ENCODE measurements at regions of chr19 and their contacts with region 1.

Region 1: GRCh38 chr19:913080-913748 is at the start of gene R3HDM4:
- DNase-seq: peak; percentile 75 to 89 (median 82)
- ATAC-seq: peak; percentile 40 to 46
- H3K4me3 Mint-ChIP-seq: peak within 1 kb of the TSS; percentile 81 to 92 (median 85)
- H3K27ac Mint-ChIP-seq: peak within 1 kb of the TSS; percentile 80 to 98 (median 94)
- H3K4me1 Mint-ChIP-seq: peaks cover 15 to 41% (median 31%) of the 10 kb centered on the region in 4 donors
- H3K27me3 Mint-ChIP-seq: peaks cover 0 to 2% (median 0%) of the 10 kb centered on the region in 5 donors
- polyA plus RNA-seq, gene R3HDM4: 137 to 238 (median 182) TPM

Region 2: GRCh38 chr19:892243-893050 is 20.8 kb before region 1 on chr19:
- POLR2A ChIA-PET with region 1: interaction called, 376 read pairs
- DNase-seq: peak in 1 of 10 donors; percentile 53
- ATAC-seq: peak; percentile 49 to 59
- H3K4me3 Mint-ChIP-seq: peak overlapping the region; percentile 77 to 96 (median 90)
- H3K27ac Mint-ChIP-seq: peak overlapping the region; percentile 66 to 100 (median 97)
- H3K4me1 Mint-ChIP-seq: peaks cover 6 to 41% (median 32%) of the 10 kb centered on the region in 4 donors
- H3K27me3 Mint-ChIP-seq: peaks cover 0 to 3% (median 0%) of the 10 kb centered on the region in 5 donors

Region 3: GRCh38 chr19:900302-901111 is 12.7 kb before region 1 on chr19:
- POLR2A ChIA-PET with region 1: interaction called, 376 read pairs
- DNase-seq: peak in 2 of 10 donors; percentile 39 to 74
- ATAC-seq: peak; percentile 33 to 62
- H3K4me3 Mint-ChIP-seq: no peak overlapping the region
- H3K27ac Mint-ChIP-seq: peak overlapping the region in 5 of 10 donors; percentile 38 to 83 (median 51)
- H3K4me1 Mint-ChIP-seq: peaks cover 5 to 46% (median 15%) of the 10 kb centered on the region in 4 donors
- H3K27me3 Mint-ChIP-seq: peaks cover 0 to 3% (median 0%) of the 10 kb centered on the region in 5 donors

Region 4: GRCh38 chr19:947265-948036 is 34.2 kb after region 1 on chr19:
- POLR2A ChIA-PET with region 1: no interaction called
- DNase-seq: peak in 1 of 10 donors; percentile 44
- ATAC-seq: peak in 1 of 2 donors; percentile 57
- H3K4me3 Mint-ChIP-seq: no peak overlapping the region
- H3K27ac Mint-ChIP-seq: no peak overlapping the region
- H3K4me1 Mint-ChIP-seq: peaks cover 0 to 18% (median 2%) of the 10 kb centered on the region in 4 donors
- H3K27me3 Mint-ChIP-seq: no peaks in the 10 kb centered on the region

Region 5: DNA sequence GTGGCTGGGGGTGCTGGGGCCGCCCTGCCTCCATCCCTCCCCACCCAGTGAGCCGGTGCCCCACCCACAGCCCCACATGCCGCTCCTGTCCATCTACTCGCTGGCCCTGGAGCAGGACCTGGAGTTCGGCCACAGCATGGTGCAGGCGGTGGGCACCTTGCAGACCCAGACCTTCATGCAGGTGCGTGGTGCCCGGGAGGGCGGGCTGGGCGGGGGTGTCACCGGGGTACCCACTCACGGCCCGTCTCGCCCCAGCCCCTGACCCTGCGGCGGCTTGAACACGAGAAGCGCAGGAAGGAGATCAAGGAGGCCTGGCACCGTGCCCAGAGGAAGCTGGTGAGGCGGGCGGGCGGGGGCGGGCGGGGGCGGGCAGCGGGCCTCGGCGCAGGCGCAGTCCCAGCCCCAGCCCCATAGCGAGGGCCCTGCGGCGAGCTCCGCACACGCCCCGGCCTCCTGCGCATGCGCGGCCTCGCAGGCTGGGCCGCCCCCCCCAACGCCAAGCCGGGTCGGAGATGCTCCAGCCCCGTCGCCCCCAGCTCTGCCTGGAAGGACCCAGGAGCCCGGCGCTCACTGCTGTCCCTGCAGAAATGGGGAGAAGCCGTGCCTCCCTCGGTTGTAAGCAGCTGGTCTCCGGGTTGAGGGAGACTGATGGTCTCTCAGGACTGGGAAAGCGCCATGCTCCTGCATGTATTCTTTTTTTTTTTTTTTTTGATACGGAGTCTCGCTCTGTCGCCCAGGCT is 161.5 kb after region 1 on chr19:
- POLR2A ChIA-PET with region 1: interaction called, 11 read pairs
- DNase-seq: peak; percentile 91 to 100 (median 95)
- ATAC-seq: peak; percentile 37 to 42
- H3K4me3 Mint-ChIP-seq: peak overlapping the region; percentile 77 to 96 (median 86)
- H3K27ac Mint-ChIP-seq: peak overlapping the region; percentile 97 to 100 (median 99)
- H3K4me1 Mint-ChIP-seq: peaks cover 23 to 63% (median 51%) of the 10 kb centered on the region in 4 donors
- H3K27me3 Mint-ChIP-seq: peaks cover 0 to 4% (median 0%) of the 10 kb centered on the region in 5 donors

Measured in naive thymus-derived CD8-positive, alpha-beta T cell (primary cell).